ENCODE measurements at regions of chr2 and their contacts with region 1.

Region 1: DNA sequence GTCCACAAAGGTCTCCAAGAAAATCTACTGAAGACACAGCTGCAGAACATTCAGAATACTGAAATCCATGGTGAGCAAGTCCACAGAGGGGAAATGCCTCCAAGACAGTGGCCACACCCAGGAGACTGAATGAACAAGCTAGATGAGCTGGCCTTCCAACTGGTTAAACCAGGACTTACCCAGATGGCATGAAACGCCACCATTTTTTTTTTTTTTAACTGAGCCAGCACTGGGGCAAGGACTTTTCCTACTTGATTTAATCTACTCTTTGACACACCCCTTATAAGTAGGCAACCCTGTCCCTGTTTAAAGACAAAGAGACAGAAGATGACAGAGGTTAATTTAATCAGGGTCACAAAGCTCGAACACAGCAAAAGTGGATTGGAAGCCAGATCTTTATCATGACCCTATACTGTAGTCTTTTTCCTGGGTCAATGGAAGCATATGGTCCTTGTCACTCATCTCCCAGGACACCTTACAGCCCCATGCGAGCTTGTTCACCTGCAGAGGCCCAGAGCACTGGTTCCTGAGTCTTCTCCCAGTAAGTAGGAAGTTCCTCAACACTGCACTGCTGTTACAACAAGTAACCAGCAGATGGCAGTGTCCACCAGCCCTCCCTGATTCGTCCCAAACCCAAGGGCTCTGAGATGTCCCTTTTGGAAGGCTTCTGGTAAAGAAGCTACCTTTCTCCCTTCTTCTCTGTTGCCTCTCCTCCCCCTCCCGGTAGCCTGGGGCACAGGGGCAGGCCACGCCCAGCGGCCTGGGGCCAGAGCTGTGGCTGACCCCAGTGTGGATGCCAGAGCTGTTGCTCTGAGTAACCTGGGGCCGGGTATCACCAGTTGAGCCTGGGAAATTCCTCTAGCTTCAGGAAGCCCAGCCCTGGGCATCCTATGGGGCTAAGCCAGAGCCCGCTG is 5.6 kb upstream of the GDF7 start:
- DNase-seq: no peak
- H3K4me3 ChIP-seq: no peak overlapping the region
- H3K27ac ChIP-seq: no peak overlapping the region
- H3K4me1 ChIP-seq: peaks cover 29% of the 10 kb centered on the region
- H3K27me3 ChIP-seq: no peaks in the 10 kb centered on the region
- CTCF ChIP-seq: peak; percentile 78 to 97 (median 94)
- POLR2A ChIP-seq: no peak

Region 2: DNA sequence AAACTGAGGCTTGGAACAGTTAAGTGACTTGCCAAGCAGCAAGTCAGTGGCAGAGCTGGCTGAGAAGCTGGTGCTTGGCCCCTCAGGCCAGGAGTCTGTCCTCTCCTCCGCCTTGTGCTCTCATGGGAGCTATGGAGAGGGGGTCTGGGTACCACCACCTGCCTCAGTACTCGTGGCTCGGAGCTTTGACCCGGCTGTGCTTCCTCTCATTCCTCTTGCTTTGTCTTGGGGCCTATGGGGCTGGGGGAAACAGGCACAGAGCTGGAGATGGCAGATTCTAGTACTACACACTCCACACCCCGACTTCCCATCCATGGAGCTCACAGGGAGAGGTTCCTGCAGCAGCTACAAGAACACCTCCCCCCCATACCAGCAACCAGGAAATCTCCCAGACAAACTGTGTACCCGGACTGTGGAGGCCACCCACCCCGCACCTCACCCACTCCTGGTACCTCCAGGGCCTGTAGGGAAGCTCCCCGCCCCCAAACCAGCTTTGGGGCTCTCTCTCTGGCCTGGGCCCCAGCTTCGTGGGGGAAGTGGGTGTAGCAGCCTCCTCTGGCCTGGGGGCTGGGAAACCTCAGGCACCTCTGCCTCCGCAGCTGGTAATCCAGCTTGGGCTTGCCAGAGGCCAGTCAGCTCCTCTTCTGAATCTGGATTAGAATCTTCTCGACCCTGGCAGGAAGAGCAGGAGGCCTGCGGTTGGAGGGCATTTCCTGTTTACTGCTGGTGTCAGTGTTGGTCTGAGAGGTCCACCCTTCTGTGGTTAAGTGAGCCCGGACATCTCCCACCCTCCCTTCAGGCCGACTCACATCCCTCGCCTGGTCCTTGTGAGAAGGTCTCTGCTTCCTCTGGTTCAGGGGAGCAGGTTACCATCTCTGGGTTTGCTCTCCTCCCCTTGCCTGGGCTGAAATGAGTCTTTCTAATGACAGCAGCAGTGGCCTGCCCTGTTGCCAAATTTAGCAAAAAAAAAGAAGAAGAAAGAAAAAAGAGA is 236.7 kb before region 1 on chr2:
- intact Hi-C with region 1: no loop called
- DNase-seq: peak; percentile 88 to 89
- H3K4me3 ChIP-seq: no peak overlapping the region
- H3K27ac ChIP-seq: peak overlapping the region; percentile 83
- H3K4me1 ChIP-seq: peaks cover 60% of the 10 kb centered on the region
- H3K27me3 ChIP-seq: no peaks in the 10 kb centered on the region
- CTCF ChIP-seq: no peak
- POLR2A ChIP-seq: no peak

Region 3: GRCh38 chr2:20962939-20963557 is 301.7 kb after region 1 on chr2:
- intact Hi-C with region 1: loop called (anchors 5 kb)
- DNase-seq: no peak
- H3K4me3 ChIP-seq: no peak overlapping the region
- H3K27ac ChIP-seq: no peak overlapping the region
- H3K4me1 ChIP-seq: no peaks in the 10 kb centered on the region
- H3K27me3 ChIP-seq: no peaks in the 10 kb centered on the region
- CTCF ChIP-seq: peak; percentile 82 to 85 (median 82)
- POLR2A ChIP-seq: no peak

Region 4: DNA sequence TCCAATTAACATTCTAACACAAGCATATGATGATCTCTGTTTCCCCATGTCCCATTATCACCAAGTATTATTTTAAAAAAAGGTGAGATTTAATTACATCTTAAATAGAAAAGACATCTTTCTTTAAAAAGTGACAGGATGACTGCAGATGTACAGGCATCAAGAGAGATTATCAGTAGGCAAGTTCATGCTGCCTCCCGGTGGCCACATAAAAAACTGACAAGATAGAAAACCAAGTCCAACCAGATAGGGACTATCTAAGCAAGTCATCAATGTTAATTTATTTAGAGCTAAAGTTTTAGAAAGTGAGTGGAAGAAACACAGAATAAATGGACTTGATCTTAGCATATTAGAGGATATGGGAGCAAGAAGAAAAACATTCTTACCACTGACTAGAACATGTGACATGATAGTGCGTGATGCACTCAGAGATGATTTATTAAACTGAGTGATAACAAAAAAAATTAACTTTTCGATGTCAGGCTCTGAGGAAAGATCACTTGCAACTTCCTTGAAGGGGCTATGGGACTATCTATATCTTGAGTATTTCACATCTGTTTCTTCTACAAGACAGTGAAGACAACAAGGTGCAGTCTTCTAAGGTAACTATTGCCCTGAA is 457.1 kb after region 1 on chr2:
- intact Hi-C with region 1: loop called (anchors 10 kb)
- DNase-seq: no peak
- H3K4me3 ChIP-seq: no peak overlapping the region
- H3K27ac ChIP-seq: no peak overlapping the region
- H3K4me1 ChIP-seq: no peaks in the 10 kb centered on the region
- H3K27me3 ChIP-seq: no peaks in the 10 kb centered on the region
- CTCF ChIP-seq: peak in 1 of 3 experiments; percentile 42
- POLR2A ChIP-seq: no peak